Vagina (tissue), 2 donors: ENCODE measurements at regions of chr3 and their contacts with region 1.

Region 1: DNA sequence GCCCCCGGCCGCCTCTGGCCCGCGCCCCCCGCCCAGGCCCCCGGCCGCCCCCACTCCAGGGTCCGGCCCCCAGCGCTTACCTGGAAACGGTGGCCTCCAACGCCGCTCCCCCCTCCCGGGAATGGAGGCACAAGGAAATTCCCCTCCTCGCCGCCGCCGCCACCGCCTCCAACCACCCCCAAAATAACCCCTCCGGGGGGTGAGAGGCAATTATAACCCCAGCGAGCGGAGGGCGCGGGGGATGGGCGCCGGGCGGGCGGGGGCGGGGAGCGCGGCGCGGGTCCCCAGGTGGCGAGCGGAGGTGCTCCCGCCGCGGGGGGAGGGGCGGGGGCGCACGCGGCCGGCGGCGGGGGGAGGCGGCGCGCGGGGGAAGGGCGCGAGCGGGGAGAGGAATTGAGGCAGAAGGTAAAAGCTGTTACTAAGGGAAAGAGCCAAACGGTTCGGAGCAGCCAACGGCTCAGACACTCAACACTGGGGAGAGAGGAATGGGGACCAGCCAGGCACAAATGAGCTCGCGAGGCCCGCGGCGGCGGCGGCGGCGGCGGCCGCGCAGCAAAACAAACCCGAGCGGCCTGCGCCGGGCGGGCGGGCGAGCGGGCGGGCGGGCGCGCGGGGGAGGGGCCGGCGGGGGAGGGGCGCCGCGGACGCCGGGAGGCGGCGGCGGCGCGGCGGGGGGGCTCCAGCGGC is at the start of gene TBL1XR1:
- DNase-seq: peak in 1 of 2 donors; percentile 92
- H3K4me3 ChIP-seq: peak within 1 kb of the TSS; percentile 65 to 93
- H3K27ac ChIP-seq: peak within 1 kb of the TSS; percentile 92
- H3K4me1 ChIP-seq: peaks cover 43% of the 10 kb centered on the region
- H3K27me3 ChIP-seq: no peaks in the 10 kb centered on the region
- CTCF ChIP-seq: no peak
- POLR2A ChIP-seq: no peak
- total RNA-seq, gene TBL1XR1: 80.5 TPM

Region 2: DNA sequence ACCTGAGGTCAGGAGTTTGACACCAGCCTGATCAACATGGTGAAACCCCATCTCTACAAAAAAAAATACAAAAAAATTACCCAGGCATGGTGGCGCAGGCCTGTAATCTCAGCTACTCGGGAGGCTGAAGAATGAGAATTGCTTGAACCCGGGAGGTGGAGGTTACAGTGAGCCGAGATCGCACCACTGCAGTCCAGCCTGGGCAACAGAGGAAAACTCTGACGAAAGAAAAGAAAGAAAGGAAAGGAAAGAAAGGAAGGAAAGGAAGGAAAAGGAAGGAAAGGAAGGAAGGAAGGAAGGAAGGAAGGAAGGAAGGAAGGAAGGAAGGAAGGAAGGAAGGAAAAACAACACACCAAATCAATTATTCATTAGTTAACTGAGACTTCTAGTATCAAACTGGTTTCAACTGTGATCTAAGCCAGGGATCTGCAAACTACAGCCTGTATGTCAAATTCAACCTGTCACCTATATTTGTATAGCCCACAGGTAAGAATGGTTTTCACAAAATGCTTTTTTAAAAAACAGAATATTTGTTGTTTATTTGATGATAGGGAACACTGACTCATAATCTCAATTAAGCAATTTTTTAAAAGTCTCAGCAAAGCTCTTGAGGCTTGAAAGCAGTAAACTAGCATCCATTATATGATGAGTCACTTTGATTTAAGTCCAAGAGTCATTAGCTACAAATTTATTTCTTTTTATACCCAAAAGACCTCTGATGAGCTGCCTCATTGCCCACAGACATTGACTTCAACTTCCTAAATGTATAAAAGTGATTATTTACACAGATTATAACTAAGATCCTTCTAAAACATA is 127.5 kb before region 1 on chr3:
- intact Hi-C with region 1: loop called (anchors 10 kb)
- DNase-seq: no peak
- H3K4me3 ChIP-seq: no peak overlapping the region
- H3K27ac ChIP-seq: no peak overlapping the region
- H3K4me1 ChIP-seq: peaks cover 55% of the 10 kb centered on the region
- H3K27me3 ChIP-seq: no peaks in the 10 kb centered on the region
- CTCF ChIP-seq: no peak
- POLR2A ChIP-seq: no peak

Region 3: GRCh38 chr3:177080122-177080521 is 117.1 kb before region 1 on chr3:
- intact Hi-C with region 1: no loop called
- DNase-seq: no peak
- H3K4me3 ChIP-seq: no peak overlapping the region
- H3K27ac ChIP-seq: no peak overlapping the region
- H3K4me1 ChIP-seq: peaks cover 11% of the 10 kb centered on the region
- H3K27me3 ChIP-seq: no peaks in the 10 kb centered on the region
- CTCF ChIP-seq: no peak
- POLR2A ChIP-seq: no peak

Region 4: DNA sequence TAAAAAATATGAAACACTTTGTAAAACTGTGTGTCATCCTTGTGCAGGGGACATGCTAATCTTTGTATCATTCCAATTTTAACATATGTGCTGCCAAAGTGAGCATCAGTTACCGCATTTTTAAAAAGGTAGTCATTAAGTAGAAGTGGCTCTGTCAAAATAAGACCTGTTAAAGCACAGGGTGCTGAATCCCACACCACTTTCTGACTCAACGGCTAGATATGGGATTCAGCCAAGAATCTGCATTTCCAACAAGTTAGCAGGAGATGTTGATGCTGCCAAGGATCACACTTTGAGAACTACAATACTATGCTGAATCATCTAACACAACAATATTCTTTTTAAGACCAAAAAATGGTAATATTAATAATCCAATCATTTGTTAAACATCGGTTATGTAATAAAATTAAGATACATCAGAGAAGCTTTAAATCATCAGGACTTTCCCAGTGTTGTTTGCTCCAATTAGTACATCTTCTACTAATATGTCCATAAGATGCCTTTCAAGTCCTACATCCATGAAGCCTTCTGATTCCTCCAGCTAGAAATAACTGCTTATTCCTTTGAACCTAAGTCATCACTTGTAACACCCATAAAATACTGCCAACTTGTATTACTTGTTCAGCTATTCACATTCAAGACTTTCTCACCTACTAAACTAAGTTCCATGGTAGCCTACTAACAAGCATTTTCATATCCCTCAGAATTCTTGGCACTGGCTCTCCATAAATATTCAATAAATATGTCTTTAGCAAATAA is 71.0 kb before region 1 on chr3:
- intact Hi-C with region 1: no loop called
- DNase-seq: no peak
- H3K4me3 ChIP-seq: no peak overlapping the region
- H3K27ac ChIP-seq: no peak overlapping the region
- H3K4me1 ChIP-seq: peaks cover 62% of the 10 kb centered on the region
- H3K27me3 ChIP-seq: no peaks in the 10 kb centered on the region
- CTCF ChIP-seq: no peak
- POLR2A ChIP-seq: no peak

Region 5: GRCh38 chr3:177136741-177137140 is 60.4 kb before region 1 on chr3:
- intact Hi-C with region 1: no loop called
- DNase-seq: no peak
- H3K4me3 ChIP-seq: no peak overlapping the region
- H3K27ac ChIP-seq: no peak overlapping the region
- H3K4me1 ChIP-seq: peaks cover 48% of the 10 kb centered on the region
- H3K27me3 ChIP-seq: no peaks in the 10 kb centered on the region
- CTCF ChIP-seq: no peak
- POLR2A ChIP-seq: no peak

Region 6: DNA sequence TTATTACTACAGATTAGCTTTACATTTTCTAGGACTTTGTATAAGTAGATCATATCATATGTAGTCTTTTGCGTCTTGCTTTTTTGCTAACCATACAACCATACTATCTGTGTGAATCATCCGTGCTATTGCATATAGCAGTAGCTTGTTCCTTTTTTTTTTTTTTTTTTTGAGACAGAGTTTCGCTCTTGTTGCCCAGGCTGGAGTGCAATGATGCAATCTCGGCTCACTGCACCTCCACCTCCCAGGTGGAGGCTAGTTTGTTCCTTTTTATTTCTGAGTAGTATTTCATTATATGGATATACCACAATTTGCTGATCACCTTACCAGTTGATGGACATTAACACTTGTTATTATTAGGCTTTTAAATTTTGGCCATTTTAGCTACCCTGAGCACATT is 54.6 kb after region 1 on chr3:
- intact Hi-C with region 1: no loop called
- DNase-seq: no peak
- H3K4me3 ChIP-seq: no peak overlapping the region
- H3K27ac ChIP-seq: no peak overlapping the region
- H3K4me1 ChIP-seq: no peaks in the 10 kb centered on the region
- H3K27me3 ChIP-seq: no peaks in the 10 kb centered on the region
- CTCF ChIP-seq: no peak
- POLR2A ChIP-seq: no peak

Region 7: DNA sequence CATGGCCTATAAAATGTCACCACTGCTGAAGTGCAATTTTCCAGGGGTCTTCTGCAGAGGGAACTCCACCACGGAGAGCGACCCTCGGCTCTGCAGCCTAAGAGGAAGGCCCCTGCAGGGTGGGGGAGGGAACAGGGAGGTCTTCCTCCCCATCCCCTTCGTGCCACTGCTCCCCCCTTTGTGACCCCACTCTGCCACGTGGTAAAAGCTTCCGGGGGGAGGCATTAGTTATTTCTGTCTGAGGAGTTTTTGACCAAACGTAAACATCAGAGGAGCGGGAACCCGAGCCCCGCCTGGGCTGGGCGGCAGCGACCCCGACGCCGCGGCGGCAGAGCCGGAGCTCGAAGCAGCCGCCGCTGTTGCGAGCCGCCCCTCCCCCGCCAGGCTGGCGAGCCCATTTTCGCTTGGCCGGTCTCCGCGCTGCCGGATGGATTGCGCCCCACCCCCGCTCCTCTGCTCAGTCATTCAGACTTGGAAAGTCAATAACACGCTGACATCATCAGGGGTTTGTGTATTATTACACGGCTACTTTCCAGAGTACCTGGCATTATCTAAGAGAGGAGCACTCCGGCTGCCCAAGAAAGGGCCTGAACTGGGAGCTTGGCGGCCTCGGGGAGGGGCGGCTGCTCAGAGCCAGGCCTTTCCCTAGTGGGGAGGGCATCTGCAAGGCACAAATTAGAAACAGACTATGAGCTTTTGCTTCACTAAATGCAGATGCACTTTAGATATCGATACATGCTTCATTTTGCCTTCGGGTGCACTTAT is 162.6 kb after region 1 on chr3:
- intact Hi-C with region 1: loop called (anchors 1 kb)
- DNase-seq: peak in 1 of 2 donors; percentile 96
- H3K4me3 ChIP-seq: peak overlapping the region; percentile 23 to 34
- H3K27ac ChIP-seq: peak overlapping the region; percentile 86
- H3K4me1 ChIP-seq: peaks cover 61% of the 10 kb centered on the region
- H3K27me3 ChIP-seq: no peaks in the 10 kb centered on the region
- CTCF ChIP-seq: no peak
- POLR2A ChIP-seq: peak in 1 of 2 donors; percentile 36